K562 (cell line): ENCODE measurements at regions of chr3 and their contacts with region 1.

Region 1: GRCh38 chr3:47197287-47197686 is 33.4 kb upstream of the SETD2 start:
- DNase-seq: no peak
- ATAC-seq: no peak
- H3K4me3 ChIP-seq: no peak overlapping the region
- H3K27ac ChIP-seq: no peak overlapping the region
- H3K4me1 ChIP-seq: peaks cover 0 to 3% of the 10 kb centered on the region in 2 experiments; a peak in 2 of 5 replicates
- H3K27me3 ChIP-seq: no peaks in the 10 kb centered on the region
- CTCF ChIP-seq: no peak
- EP300 ChIP-seq: no peak
- POLR2A ChIP-seq: no peak
- RAD21 ChIP-seq: no peak

Region 2: DNA sequence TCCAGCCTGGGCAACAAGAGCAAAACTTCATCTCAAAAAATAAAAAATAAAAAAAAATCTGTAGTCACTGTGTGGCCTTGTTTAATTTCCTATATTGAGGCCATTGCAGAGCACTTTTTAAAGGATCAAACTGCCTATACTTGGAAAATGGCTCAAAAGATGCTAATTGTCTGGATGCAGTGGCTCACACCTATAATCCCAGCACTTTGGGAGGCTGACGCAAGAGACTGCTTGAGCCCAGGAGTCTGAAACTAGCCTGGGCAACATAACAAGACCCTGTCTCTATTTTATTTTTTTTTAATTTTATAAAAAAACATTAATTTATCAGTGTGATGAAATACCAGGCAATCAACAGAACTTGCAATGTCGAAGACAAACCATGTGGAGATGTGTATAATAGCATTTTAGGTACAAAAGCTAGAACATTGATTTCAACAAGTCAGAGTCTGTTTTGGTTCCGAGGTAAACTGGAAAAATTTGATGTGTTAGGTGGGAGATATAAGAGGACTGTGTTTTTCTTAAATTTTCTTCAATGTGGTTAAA is 13.6 kb after region 1 on chr3:
- CTCF ChIA-PET with region 1: no interaction called
- POLR2A ChIA-PET with region 1: interaction called, 11 read pairs
- in situ Hi-C with region 1: no loop called
- intact Hi-C with region 1: no loop called
- DNase-seq: no peak
- ATAC-seq: no peak
- H3K4me3 ChIP-seq: no peak overlapping the region
- H3K27ac ChIP-seq: no peak overlapping the region
- H3K4me1 ChIP-seq: peaks cover 2 to 6% of the 10 kb centered on the region in 2 experiments; a peak in 2 of 5 replicates
- H3K27me3 ChIP-seq: no peaks in the 10 kb centered on the region
- CTCF ChIP-seq: no peak
- EP300 ChIP-seq: no peak
- POLR2A ChIP-seq: no peak
- RAD21 ChIP-seq: no peak